ENCODE measurements at regions of chr21 and their contacts with region 1.

Region 1: GRCh38 chr21:41725421-41726041 is 41.3 kb downstream of the RIPK4 start:
- DNase-seq: no peak
- H3K4me3 ChIP-seq: no peak overlapping the region
- H3K27ac ChIP-seq: no peak overlapping the region
- H3K4me1 ChIP-seq: peaks cover 8% of the 10 kb centered on the region
- H3K27me3 ChIP-seq: no peaks in the 10 kb centered on the region
- CTCF ChIP-seq: no peak

Region 2: GRCh38 chr21:41668686-41669532 is 56.6 kb before region 1 on chr21:
- CTCF ChIA-PET with region 1: interaction called, 10 read pairs
- POLR2A ChIA-PET with region 1: no interaction called
- intact Hi-C with region 1: no loop called
- DNase-seq: no peak
- H3K4me3 ChIP-seq: no peak overlapping the region
- H3K27ac ChIP-seq: no peak overlapping the region
- H3K4me1 ChIP-seq: no peaks in the 10 kb centered on the region
- H3K27me3 ChIP-seq: no peaks in the 10 kb centered on the region
- CTCF ChIP-seq: no peak

Region 3: DNA sequence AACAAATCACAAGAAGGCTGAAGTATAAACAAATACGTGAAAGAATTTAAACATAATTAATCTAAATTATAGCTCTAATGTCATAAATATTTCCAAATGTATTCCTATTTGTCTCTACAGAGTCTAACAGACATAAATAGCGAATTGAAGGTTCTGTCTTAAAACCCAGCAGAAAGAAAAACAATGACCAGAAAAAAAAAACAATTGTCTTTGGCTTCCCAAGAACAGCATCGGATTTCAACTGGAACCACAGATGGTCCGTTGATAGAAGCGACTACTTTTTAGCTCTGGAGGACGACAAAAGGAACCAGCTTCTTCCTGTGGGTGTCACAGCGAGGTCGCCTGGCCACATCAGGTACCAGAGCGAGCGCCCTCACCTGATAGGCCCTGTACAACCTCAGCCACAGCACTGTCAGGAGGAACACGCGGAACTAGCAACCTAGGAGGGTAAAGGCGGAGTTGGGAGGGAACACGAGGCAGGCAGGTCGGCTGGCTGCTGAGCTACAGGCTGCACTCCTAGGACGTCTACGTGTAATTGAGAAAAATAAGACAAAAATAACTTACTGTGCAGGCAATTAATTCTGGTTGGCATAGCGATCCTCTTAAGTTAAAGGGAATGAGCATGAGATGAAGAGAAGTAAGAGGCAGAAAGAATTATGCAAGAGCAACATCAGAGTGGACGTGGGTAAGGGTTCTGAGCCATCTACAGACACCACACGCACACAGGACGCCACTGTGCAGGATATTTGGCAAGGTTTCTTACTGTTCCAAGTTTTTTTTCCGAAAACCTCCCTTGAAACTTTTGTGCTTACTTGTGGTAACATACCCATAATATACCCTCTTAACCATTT is 170.3 kb after region 1 on chr21:
- CTCF ChIA-PET with region 1: no interaction called
- POLR2A ChIA-PET with region 1: no interaction called
- intact Hi-C with region 1: no loop called
- DNase-seq: no peak
- H3K4me3 ChIP-seq: no peak overlapping the region
- H3K27ac ChIP-seq: no peak overlapping the region
- H3K4me1 ChIP-seq: peaks cover 10% of the 10 kb centered on the region
- H3K27me3 ChIP-seq: no peaks in the 10 kb centered on the region
- CTCF ChIP-seq: no peak

Measured in A673 (cell line).